ENCODE measurements at regions of chr15 and their contacts with region 1.

Region 1: DNA sequence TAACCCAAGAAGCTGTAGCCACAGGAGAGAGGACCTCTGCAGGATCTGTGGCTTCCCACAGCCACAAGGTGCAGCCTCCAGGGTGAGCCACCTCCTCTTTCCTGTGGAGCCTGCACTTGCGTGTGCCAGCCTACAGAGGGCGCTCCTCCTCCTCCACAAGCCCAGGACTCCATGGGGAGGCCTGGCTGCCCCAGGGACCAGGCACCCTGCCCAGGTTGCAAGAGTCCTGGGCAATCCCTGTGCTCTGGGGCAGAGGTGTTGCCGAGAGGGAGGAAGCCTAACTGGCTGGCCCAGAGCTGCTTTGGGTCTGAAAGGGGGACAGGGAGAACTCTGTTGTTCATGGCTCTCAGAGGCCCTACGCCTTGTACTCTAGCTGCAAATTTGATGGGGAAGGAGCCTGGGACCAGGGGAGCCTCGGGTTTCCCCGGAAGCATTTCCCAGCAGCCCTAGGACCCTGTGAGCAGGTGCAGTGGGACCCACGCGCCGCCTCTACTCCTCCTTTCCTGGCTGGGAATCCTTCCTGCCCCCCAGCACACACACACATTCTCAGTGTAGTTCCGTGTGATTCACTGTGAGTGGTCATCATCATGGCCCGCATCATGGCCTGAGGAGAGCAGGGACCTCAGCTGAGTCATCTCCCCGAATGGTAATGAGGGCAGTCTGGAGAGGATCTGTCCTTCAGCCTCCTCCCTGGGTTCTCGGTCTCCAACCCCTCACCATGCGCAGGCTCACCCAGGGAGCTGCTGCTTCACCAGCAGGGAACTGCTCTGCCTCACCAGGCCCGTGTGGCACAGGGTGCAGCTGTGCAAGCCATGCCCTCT is 24.3 kb downstream of the TBC1D21 start:
- DNase-seq: peak; percentile 65
- H3K4me3 ChIP-seq: no peak overlapping the region
- H3K27ac ChIP-seq: no peak overlapping the region
- H3K4me1 ChIP-seq: no peaks in the 10 kb centered on the region
- H3K27me3 ChIP-seq: peaks cover 0 to 1% of the 10 kb centered on the region in 2 experiments
- CTCF ChIP-seq: peak; percentile 90 to 96
- POLR2A ChIP-seq: no peak

Region 2: DNA sequence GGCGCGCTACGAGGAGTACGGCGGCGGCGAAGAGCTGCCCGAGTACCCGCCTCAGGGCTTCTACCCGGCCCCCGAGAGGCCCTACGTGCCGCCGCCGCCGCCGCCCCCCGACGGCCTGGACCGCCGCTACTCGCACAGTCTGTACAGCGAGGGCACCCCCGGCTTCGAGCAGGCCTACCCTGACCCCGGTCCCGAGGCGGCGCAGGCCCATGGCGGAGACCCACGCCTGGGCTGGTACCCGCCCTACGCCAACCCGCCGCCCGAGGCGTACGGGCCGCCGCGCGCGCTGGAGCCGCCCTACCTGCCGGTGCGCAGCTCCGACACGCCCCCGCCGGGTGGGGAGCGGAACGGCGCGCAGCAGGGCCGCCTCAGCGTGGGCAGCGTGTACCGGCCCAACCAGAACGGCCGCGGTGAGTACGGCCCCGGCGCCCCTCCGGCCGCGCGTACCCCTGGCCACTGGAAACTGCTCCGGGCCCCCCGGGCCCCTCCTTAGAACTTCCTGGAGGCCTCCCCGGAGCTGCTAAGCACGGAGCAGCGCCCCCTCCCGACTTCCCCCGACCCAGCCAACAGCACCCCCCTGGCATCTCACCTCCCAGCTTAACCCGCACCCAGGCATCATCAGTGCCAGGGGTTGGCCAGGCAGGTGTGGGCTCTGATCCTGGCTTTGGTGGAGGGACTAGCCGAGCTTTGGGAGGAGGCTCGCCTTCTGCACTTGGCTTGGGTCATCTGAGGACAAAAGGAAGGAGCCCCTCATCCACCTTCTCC is 30.0 kb after region 1 on chr15:
- CTCF ChIA-PET with region 1: interaction called, 3 read pairs
- POLR2A ChIA-PET with region 1: no interaction called
- dilution Hi-C with region 1: no loop called
- intact Hi-C with region 1: loop called (anchors 1 kb)
- DNase-seq: peak; percentile 45
- H3K4me3 ChIP-seq: peak overlapping the region in 1 of 3 experiments; percentile 45
- H3K27ac ChIP-seq: no peak overlapping the region
- H3K4me1 ChIP-seq: peaks cover 24% of the 10 kb centered on the region
- H3K27me3 ChIP-seq: no peaks in the 10 kb centered on the region
- CTCF ChIP-seq: peak; percentile 28 to 51
- POLR2A ChIP-seq: no peak

Region 3: GRCh38 chr15:74208901-74209559 is 311.4 kb after region 1 on chr15:
- CTCF ChIA-PET with region 1: no interaction called
- POLR2A ChIA-PET with region 1: no interaction called
- dilution Hi-C with region 1: no loop called
- intact Hi-C with region 1: no loop called
- DNase-seq: no peak
- H3K4me3 ChIP-seq: no peak overlapping the region
- H3K27ac ChIP-seq: no peak overlapping the region
- H3K4me1 ChIP-seq: no peaks in the 10 kb centered on the region
- H3K27me3 ChIP-seq: peaks cover 0 to 2% of the 10 kb centered on the region in 2 experiments
- CTCF ChIP-seq: no peak
- POLR2A ChIP-seq: no peak